Ascending aorta (tissue), 2 donors: ENCODE measurements at regions of chr18 and their contacts with region 1.

Region 1: DNA sequence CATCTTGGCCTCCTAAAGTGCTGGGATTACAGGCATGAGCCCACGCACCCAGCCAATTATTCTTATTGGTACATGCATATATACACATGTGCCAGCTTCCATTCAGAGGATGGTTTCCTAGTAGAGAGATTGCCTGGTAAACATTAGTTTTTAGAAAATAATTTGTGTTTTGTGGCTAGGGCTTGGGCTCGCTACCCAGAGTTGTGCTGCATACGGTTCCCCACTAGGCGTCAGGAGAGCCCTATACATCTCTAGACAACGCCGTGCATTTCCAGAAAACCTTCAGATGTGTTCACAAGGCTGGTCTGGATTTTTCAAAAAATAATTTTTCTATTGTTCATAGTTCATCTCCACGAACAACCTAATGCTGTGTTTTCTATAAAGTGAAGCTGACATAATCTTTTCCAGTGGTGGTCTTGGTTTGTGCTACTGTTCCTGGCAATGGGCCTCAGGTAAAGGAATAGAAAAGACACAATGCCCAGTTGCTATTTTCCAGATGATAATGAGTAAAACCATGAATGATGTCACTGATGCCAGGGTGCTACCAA is 14.7 kb upstream of the AFG3L2 start:
- DNase-seq: peak in 1 of 2 donors; percentile 75
- H3K4me3 ChIP-seq: no peak overlapping the region
- H3K27ac ChIP-seq: peak overlapping the region in 1 of 2 donors; percentile 22
- H3K4me1 ChIP-seq: no peaks in the 10 kb centered on the region
- H3K27me3 ChIP-seq: no peaks in the 10 kb centered on the region
- CTCF ChIP-seq: peak; percentile 83 to 91 (median 88)

Region 2: GRCh38 chr18:12376718-12377555 is 14.8 kb before region 1 on chr18 and contains the start of gene AFG3L2:
- intact Hi-C with region 1: no loop called
- DNase-seq: peak; percentile 98 to 100
- H3K4me3 ChIP-seq: peak within 1 kb of the TSS; percentile 89 to 92
- H3K27ac ChIP-seq: peak within 1 kb of the TSS; percentile 99 to 100
- H3K4me1 ChIP-seq: peaks cover 6 to 16% of the 10 kb centered on the region in 2 donors
- H3K27me3 ChIP-seq: no peaks in the 10 kb centered on the region
- CTCF ChIP-seq: no peak
- total RNA-seq, gene AFG3L2: 31.5 TPM

Region 3: GRCh38 chr18:12460874-12461273 is 69.2 kb after region 1 on chr18:
- intact Hi-C with region 1: loop called (anchors 5 kb)
- DNase-seq: no peak
- H3K4me3 ChIP-seq: no peak overlapping the region
- H3K27ac ChIP-seq: no peak overlapping the region
- H3K4me1 ChIP-seq: no peaks in the 10 kb centered on the region
- H3K27me3 ChIP-seq: no peaks in the 10 kb centered on the region
- CTCF ChIP-seq: no peak

Region 4: GRCh38 chr18:12520442-12520992 is 128.8 kb after region 1 on chr18:
- intact Hi-C with region 1: no loop called
- DNase-seq: no peak
- H3K4me3 ChIP-seq: no peak overlapping the region
- H3K27ac ChIP-seq: peak overlapping the region in 1 of 2 donors; percentile 35
- H3K4me1 ChIP-seq: peaks cover 5 to 19% of the 10 kb centered on the region in 2 donors
- H3K27me3 ChIP-seq: no peaks in the 10 kb centered on the region
- CTCF ChIP-seq: no peak

Region 5: GRCh38 chr18:13124411-13124810 is 732.7 kb after region 1 on chr18:
- intact Hi-C with region 1: no loop called
- DNase-seq: no peak
- H3K4me3 ChIP-seq: no peak overlapping the region
- H3K27ac ChIP-seq: no peak overlapping the region
- H3K4me1 ChIP-seq: no peaks in the 10 kb centered on the region
- H3K27me3 ChIP-seq: no peaks in the 10 kb centered on the region
- CTCF ChIP-seq: no peak